ENCODE measurements at regions of chr3 and their contacts with region 1.

Region 1: DNA sequence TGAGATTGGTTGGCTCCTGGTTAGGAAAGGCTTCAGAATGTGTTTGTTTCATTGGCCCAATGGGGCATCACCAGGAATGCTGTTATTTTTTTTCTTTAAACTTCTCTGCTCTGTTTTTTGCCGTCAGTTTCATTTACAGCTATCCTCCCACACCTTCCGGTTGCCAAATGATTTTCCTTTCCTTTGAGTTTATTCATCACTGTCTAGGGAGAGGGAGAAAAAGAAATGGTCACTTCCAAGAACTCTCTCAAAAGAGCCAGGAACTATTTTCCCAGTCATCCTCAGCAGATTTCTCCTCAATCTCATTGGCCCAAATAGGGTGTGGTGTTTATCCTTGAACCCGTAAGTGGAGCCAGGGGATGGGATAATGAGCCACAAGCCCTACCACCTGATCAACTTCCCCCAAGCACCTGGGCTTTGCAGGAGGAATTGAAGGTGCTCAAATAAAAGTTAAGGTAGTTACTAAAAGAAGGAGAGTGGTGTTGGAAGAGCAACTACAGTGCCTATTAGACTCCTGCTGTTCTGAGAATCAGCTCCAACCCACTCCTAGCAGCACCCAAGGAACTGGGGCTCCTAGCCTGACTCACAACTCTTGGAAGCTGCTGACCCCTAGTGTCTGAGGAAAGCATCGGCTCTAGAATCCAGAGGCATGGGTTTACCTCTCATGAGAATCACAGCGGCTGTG is 183.8 kb upstream of the IL12A start:
- H3K4me3 ChIP-seq: no peak overlapping the region
- H3K27ac ChIP-seq: no peak overlapping the region
- H3K4me1 ChIP-seq: peaks cover 26% of the 10 kb centered on the region
- CTCF ChIP-seq: peak; percentile 76

Region 2: DNA sequence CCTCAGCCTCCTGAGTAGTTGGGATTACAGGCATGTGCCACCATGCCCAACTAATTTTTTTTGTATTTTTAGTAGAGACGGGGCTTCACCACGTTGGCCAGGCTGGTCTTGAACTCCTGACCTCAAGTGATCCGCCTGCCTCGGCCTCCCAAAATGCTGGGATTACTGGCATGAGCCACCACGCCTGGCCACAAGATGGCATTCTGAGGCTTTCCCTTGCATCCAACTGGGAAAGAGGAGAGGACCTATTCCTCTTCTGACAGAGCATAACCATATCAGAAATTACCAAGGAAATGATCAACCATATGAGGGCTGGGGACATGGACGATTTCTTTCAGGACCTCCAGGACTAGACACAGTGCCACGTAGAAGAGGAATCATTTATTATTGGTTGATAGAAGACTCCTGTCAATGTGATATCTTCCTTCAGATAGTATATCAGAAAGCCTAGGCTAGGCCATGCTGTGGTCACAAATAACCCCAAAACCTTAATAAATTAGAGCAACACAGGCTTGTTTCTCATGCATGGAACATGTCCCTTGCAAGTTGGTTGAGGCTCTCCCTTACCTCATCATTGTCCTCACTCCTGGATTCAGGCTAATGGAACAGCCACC is 188.5 kb before region 1 on chr3:
- CTCF ChIA-PET with region 1: interaction called, 11 read pairs
- POLR2A ChIA-PET with region 1: no interaction called
- H3K4me3 ChIP-seq: no peak overlapping the region
- H3K27ac ChIP-seq: no peak overlapping the region
- H3K4me1 ChIP-seq: peaks cover 25% of the 10 kb centered on the region
- CTCF ChIP-seq: peak; percentile 71

Region 3: GRCh38 chr3:159724627-159725026 is 80.2 kb before region 1 on chr3:
- CTCF ChIA-PET with region 1: no interaction called
- POLR2A ChIA-PET with region 1: no interaction called
- H3K4me3 ChIP-seq: no peak overlapping the region
- H3K27ac ChIP-seq: no peak overlapping the region
- H3K4me1 ChIP-seq: peaks cover 7% of the 10 kb centered on the region; the same call in 1 of the 2 replicates
- CTCF ChIP-seq: no peak

Region 4: GRCh38 chr3:159781867-159782266 is 23.0 kb before region 1 on chr3:
- CTCF ChIA-PET with region 1: interaction called, 12 read pairs
- POLR2A ChIA-PET with region 1: no interaction called
- H3K4me3 ChIP-seq: no peak overlapping the region
- H3K27ac ChIP-seq: no peak overlapping the region
- H3K4me1 ChIP-seq: peaks cover 38% of the 10 kb centered on the region
- CTCF ChIP-seq: no peak

Measured in HEK293 (cell line).